Activated CD4-positive, alpha-beta T cell treated with anti-CD3 and anti-CD28 coated beads, Interleukin-2, amount 10 ng/mL, durations not matched to agents 24 days and 14 days (primary cell): ENCODE measurements at regions of chr3 and their contacts with region 1.

Region 1: DNA sequence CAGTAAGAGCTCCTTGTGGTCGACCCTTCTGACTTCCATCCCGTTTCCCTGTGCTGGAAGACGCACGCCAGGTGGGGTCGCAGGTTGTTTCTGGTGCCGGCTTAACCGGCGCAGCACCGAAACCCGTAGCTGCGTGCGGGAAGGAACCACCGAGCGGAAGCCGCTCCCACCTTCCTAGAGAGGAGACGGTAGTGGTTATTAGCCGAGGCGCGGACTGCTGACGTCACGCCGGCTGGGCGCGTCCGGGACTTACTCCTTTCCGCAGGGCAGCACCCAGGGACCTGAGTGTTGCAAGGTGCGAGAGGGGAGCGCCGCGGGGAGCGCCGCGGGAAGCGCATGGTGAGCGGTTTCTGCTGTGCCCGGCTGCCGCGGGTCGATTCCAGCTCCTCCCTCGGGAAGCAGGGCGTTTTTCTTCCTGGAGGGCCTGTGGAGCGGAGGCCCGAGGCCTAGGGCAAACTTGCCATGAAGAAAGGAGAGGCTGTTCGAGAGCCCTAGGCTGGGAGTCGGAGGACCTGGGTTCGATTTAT is at the start of gene ZNF501:
- DNase-seq: peak; percentile 93
- H3K4me3 Mint-ChIP-seq: peak within 1 kb of the TSS; percentile 95
- H3K27ac Mint-ChIP-seq: peak within 1 kb of the TSS; percentile 81
- H3K4me1 Mint-ChIP-seq: peaks cover 7% of the 10 kb centered on the region
- H3K27me3 Mint-ChIP-seq: no peaks in the 10 kb centered on the region
- total RNA-seq, gene ZNF501: 1.1 and 1.4 TPM in 2 replicates

Region 2: GRCh38 chr3:44554626-44555592 is 174.5 kb before region 1 on chr3 and contains the start of gene ZKSCAN7:
- intact Hi-C with region 1: no loop called
- DNase-seq: peak; percentile 81
- H3K4me3 Mint-ChIP-seq: peak within 1 kb of the TSS; percentile 86
- H3K27ac Mint-ChIP-seq: peak within 1 kb of the TSS; percentile 42
- H3K4me1 Mint-ChIP-seq: peaks cover 8% of the 10 kb centered on the region
- H3K27me3 Mint-ChIP-seq: no peaks in the 10 kb centered on the region
- total RNA-seq, gene ZKSCAN7: 0.79 and 0.90 TPM in 2 replicates

Region 3: GRCh38 chr3:44685128-44685800 is 44.2 kb before region 1 on chr3:
- intact Hi-C with region 1: no loop called
- DNase-seq: peak; percentile 79
- H3K4me3 Mint-ChIP-seq: peak overlapping the region; percentile 74
- H3K27ac Mint-ChIP-seq: no peak overlapping the region
- H3K4me1 Mint-ChIP-seq: peaks cover 6% of the 10 kb centered on the region
- H3K27me3 Mint-ChIP-seq: peaks cover 9% of the 10 kb centered on the region

Region 4: GRCh38 chr3:44712455-44713075 is 16.9 kb before region 1 on chr3 and contains the start of gene ZNF502:
- intact Hi-C with region 1: loop called (anchors 1 kb)
- DNase-seq: peak; percentile 73
- H3K4me3 Mint-ChIP-seq: peak within 1 kb of the TSS; percentile 83
- H3K27ac Mint-ChIP-seq: no peak within 1 kb of the TSS
- H3K4me1 Mint-ChIP-seq: peaks cover 4% of the 10 kb centered on the region
- H3K27me3 Mint-ChIP-seq: peaks cover 2% of the 10 kb centered on the region
- total RNA-seq, gene ZNF502: 0.47 and 0.82 TPM in 2 replicates

Region 5: GRCh38 chr3:44845528-44846520 is 116.4 kb after region 1 on chr3:
- intact Hi-C with region 1: no loop called
- DNase-seq: no peak
- H3K4me3 Mint-ChIP-seq: no peak overlapping the region
- H3K27ac Mint-ChIP-seq: peak overlapping the region; percentile 41
- H3K4me1 Mint-ChIP-seq: no peaks in the 10 kb centered on the region
- H3K27me3 Mint-ChIP-seq: no peaks in the 10 kb centered on the region

Region 6: DNA sequence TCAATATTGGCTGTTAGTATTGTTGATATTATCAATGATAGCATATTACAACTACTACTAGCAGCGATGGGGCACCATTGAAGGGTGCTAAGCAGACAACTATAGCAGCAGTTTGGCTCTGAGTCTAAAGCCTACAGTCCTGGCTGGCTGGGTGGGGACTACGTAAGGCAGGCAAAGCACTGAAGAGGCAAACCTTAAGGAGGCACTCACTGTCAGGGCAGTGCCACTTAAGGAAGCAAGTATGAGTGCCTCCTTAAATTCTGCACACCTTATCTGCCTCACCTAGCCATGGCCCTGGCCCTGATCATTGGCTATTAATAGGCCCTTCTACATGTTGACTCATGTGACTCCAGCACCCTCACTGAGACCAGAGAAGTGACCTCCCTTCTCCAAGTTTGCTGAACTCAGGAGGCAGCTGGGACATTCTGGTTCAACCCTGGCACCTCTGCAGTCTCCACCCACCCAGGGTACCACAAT is 396.1 kb after region 1 on chr3:
- intact Hi-C with region 1: no loop called
- DNase-seq: no peak
- H3K4me3 Mint-ChIP-seq: no peak overlapping the region
- H3K27ac Mint-ChIP-seq: no peak overlapping the region
- H3K4me1 Mint-ChIP-seq: peaks cover 21% of the 10 kb centered on the region
- H3K27me3 Mint-ChIP-seq: peaks cover 13% of the 10 kb centered on the region